ENCODE measurements at regions of chr20 and their contacts with region 1.

Region 1: GRCh38 chr20:11274141-11274594 is 600.4 kb upstream of the JAG1 start:
- DNase-seq: peak in 2 of 10 donors; percentile 48 to 54
- H3K4me3 ChIP-seq: peak overlapping the region in 1 of 59 donors; percentile 5
- H3K27ac ChIP-seq: peak overlapping the region in 1 of 59 donors; percentile 21
- H3K27me3 ChIP-seq: no peaks in the 10 kb centered on the region
- CTCF ChIP-seq: peak in 55 of 56 donors; percentile 55 to 91 (median 72)

Region 2: GRCh38 chr20:10487142-10488136 is 786.7 kb before region 1 on chr20:
- intact Hi-C with region 1: loop called in 1 of 2 experiments (anchors 10 kb)
- DNase-seq: no peak
- H3K4me3 ChIP-seq: no peak overlapping the region
- H3K27ac ChIP-seq: no peak overlapping the region
- H3K27me3 ChIP-seq: no peaks in the 10 kb centered on the region
- CTCF ChIP-seq: no peak

Region 3: GRCh38 chr20:10553326-10553984 is 720.7 kb before region 1 on chr20:
- intact Hi-C with region 1: loop called (anchors 5 to 10 kb)
- DNase-seq: peak in 8 of 10 donors; percentile 9 to 76 (median 52)
- H3K4me3 ChIP-seq: no peak overlapping the region
- H3K27ac ChIP-seq: no peak overlapping the region
- H3K27me3 ChIP-seq: no peaks in the 10 kb centered on the region
- CTCF ChIP-seq: peak; percentile 56 to 87 (median 76)

Region 4: GRCh38 chr20:11549172-11550103 is 275.3 kb after region 1 on chr20:
- intact Hi-C with region 1: loop called in 1 of 2 experiments (anchors 5 kb)
- DNase-seq: no peak
- H3K4me3 ChIP-seq: no peak overlapping the region
- H3K27ac ChIP-seq: no peak overlapping the region
- H3K27me3 ChIP-seq: no peaks in the 10 kb centered on the region
- CTCF ChIP-seq: no peak